ENCODE measurements at regions of chr1 and their contacts with region 1.

Region 1: GRCh38 chr1:27044613-27045151 is 32.0 kb upstream of the TENT5B start:
- DNase-seq: peak; percentile 87
- ATAC-seq: peak; percentile 94

Region 2: GRCh38 chr1:26999440-26999987 is 45.2 kb before region 1 on chr1:
- intact Hi-C with region 1: loop called in 1 of 2 experiments (anchors 5 kb)
- DNase-seq: peak; percentile 69
- ATAC-seq: peak; percentile 69 to 77

Region 3: GRCh38 chr1:27097484-27097917 is 52.8 kb after region 1 on chr1:
- intact Hi-C with region 1: loop called (anchors 1 to 2 kb)
- DNase-seq: peak; percentile 81
- ATAC-seq: peak; percentile 45 to 48

Region 4: GRCh38 chr1:27284425-27285273 is 240.0 kb after region 1 on chr1:
- intact Hi-C with region 1: loop called in 1 of 2 experiments (anchors 5 kb)
- DNase-seq: peak; percentile 89
- ATAC-seq: peak; percentile 86 to 87

Measured in left cardiac atrium (tissue), 4 donors.